Activated T-helper 1 cell treated with anti-CD3 and anti-CD28 coated beads, Interleukin-12 subunit alpha, Interleukin-12 subunit beta, Interleukin-2, Interleukin-4 antibody, amounts not matched to agents 30 ng/mL and 10 ng/mL and 1 ng/mL, durations not matched to agents 14 hours and 24 hours and 36 hours (primary cell): ENCODE measurements at regions of chr17 and their contacts with region 1.

Region 1: GRCh38 chr17:17859909-17860765 is 23.4 kb upstream of the SREBF1 start:
- DNase-seq: peak; percentile 59
- H3K4me3 Mint-ChIP-seq: no peak overlapping the region
- H3K27ac Mint-ChIP-seq: no peak overlapping the region
- H3K4me1 Mint-ChIP-seq: peaks cover 24% of the 10 kb centered on the region
- H3K27me3 Mint-ChIP-seq: no peaks in the 10 kb centered on the region

Region 2: DNA sequence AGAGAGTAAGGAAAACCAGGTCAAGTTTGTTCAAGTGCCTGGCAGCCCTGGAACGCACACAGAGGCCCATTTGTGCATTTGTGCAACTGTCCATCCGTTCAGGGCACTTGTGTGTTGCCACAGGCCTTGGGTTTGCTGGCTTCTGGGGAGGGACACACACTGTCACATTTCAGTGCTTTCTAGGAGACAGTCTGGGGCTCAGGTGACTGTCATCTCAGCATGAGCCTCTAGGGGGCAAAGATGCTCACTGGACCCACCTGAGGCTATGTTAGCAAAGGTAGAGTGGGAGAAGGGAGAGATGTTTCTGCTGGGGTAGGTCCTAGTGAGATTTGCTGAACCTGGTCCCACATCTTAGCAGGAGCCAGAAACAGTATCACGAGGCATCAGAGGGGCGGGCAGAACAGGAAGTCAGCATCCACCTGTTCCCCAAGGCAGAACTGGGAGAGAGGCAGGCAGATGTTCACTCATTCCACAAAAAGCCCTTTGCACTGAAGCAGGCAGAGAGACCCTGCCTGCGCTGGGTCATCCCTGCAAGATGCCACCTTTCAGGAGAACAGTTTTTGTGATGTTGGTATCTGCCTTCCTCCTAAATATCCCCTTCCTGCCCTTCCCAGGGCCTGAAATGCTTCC is 130.4 kb before region 1 on chr17:
- intact Hi-C with region 1: loop called (anchors 1 kb)
- DNase-seq: peak; percentile 41
- H3K4me3 Mint-ChIP-seq: no peak overlapping the region
- H3K27ac Mint-ChIP-seq: no peak overlapping the region
- H3K4me1 Mint-ChIP-seq: peaks cover 16% of the 10 kb centered on the region
- H3K27me3 Mint-ChIP-seq: peaks cover 5% of the 10 kb centered on the region

Region 3: GRCh38 chr17:17792551-17793377 is 67.4 kb before region 1 on chr17:
- intact Hi-C with region 1: loop called (anchors 1 kb)
- DNase-seq: peak; percentile 68
- H3K4me3 Mint-ChIP-seq: peak overlapping the region; percentile 42
- H3K27ac Mint-ChIP-seq: peak overlapping the region; percentile 84
- H3K4me1 Mint-ChIP-seq: peaks cover 26% of the 10 kb centered on the region
- H3K27me3 Mint-ChIP-seq: no peaks in the 10 kb centered on the region

Region 4: GRCh38 chr17:17812211-17813057 is 47.7 kb before region 1 on chr17:
- intact Hi-C with region 1: loop called (anchors 1 kb)
- DNase-seq: peak; percentile 40
- H3K4me3 Mint-ChIP-seq: no peak overlapping the region
- H3K27ac Mint-ChIP-seq: no peak overlapping the region
- H3K4me1 Mint-ChIP-seq: peaks cover 5% of the 10 kb centered on the region
- H3K27me3 Mint-ChIP-seq: no peaks in the 10 kb centered on the region